IMR-90 (cell line): ENCODE measurements at regions of chr17 and their contacts with region 1.

Region 1: GRCh38 chr17:17681187-17681848 is at the start of gene RAI1:
- DNase-seq: peak; percentile 79
- ATAC-seq: peak; percentile 56
- H3K4me3 ChIP-seq: peak within 1 kb of the TSS; percentile 70
- H3K27ac ChIP-seq: peak within 1 kb of the TSS; percentile 81
- H3K4me1 ChIP-seq: peaks cover 18% of the 10 kb centered on the region
- H3K27me3 ChIP-seq: no peaks in the 10 kb centered on the region
- CTCF ChIP-seq: peak; percentile 83
- POLR2A ChIP-seq: peak; percentile 72
- RAD21 ChIP-seq: peak; percentile 80
- total RNA-seq, gene RAI1: 1.8 and 1.9 TPM in 2 replicates

Region 2: DNA sequence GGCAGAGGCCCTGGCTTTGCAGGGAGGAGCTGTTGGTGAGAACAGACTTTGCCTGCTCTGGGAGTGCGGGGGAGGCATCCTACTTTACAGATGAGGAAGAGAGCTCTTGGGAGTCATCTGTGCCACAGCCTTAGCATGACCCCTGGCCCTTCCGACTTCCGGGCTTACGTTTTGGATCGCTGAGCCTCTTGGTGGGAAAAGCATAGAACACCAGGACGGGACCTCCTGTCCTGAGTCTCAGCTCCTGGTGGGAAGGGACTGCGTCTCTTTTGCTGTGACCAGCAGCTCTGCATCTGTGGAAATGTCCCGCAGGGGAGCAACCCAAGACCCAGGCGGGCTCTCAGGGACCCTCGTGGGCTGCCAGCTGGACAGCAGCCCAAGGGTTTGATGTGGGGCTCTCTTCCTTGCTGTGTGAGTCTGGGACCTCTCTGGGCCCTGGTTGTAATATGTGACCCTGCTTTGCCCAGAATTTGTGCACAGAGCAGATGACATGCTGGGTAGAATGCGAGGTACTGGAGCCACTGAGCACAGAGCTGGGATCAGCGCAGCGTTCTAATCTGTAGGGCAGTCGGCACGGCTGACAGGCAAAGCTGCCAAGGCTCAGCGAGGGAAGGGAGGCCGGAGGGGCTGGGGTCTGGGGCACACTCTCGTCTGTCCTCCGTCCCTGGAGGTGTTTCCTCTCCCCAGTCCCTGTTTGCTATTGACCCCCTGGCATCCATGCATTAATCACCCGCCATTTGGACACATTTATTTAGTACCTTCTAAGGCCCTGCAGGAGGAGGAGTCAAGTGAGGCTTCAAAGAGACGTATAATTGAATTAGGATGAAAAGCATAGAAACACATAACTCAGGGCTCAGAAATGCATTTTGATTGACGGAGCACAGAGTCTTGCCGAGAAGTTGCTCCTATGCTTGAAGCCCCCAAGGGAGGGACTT is 314.1 kb before region 1 on chr17:
- CTCF ChIA-PET with region 1: no interaction called
- POLR2A ChIA-PET with region 1: no interaction called
- dilution Hi-C with region 1: no loop called
- in situ Hi-C with region 1: no loop called
- intact Hi-C with region 1: no loop called
- DNase-seq: no peak
- ATAC-seq: no peak
- H3K4me3 ChIP-seq: no peak overlapping the region
- H3K27ac ChIP-seq: no peak overlapping the region
- H3K4me1 ChIP-seq: peaks cover 2% of the 10 kb centered on the region; the same call in 1 of the 2 replicates
- H3K27me3 ChIP-seq: peaks cover 12% of the 10 kb centered on the region; the same call in 1 of the 2 replicates
- CTCF ChIP-seq: no peak
- POLR2A ChIP-seq: no peak
- RAD21 ChIP-seq: no peak

Region 3: DNA sequence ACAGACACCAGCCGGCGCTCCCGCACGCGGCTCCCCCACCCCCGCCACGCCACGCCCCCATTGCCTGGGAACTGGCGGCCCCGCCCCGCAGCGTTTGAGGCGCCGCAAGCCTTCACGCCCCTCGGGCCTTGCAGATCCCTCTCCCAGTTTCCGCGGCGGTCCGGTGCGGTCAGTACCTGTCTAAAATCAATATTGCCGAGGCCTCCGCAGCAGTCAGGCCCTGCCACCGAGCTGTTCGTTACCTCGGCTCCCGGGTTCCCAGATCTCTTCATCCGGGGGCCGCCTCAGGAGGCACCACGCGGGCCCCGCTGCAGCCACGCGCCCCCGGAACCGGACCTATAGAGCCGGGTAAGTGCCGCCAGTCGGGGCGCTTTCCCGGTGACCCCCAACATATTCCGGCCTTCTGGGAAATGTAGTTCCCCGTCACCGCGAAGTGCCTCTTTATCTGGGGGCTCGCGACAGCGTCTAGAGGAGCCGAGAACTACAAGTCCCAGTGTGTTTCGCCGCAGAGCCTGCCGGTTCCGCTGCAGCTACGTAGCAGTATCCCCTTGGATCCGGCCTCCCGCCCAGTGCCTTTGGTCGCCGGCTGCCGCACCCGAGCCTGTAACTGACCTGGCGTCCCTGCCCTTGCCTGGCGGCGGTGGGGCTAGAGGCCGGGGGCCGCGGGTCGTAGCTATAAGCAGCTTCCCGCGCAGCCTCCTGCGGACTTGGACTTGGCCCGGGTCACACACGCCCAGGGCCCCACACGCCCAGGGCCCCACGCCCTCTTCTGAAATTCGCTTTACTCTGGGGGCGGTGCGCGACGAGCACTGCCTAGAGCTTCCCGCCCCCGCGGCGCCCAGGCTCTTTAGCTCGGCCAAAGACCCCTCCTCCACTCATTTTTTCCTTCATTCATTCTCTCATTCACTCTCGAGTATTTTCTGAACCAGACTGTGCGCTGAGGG is 89.7 kb before region 1 on chr17 and contains the start of gene PEMT:
- CTCF ChIA-PET with region 1: no interaction called
- POLR2A ChIA-PET with region 1: no interaction called
- dilution Hi-C with region 1: no loop called
- in situ Hi-C with region 1: no loop called
- intact Hi-C with region 1: no loop called
- DNase-seq: peak; percentile 99
- ATAC-seq: peak; percentile 96
- H3K4me3 ChIP-seq: peak within 1 kb of the TSS; percentile 80
- H3K27ac ChIP-seq: peak within 1 kb of the TSS; percentile 84
- H3K4me1 ChIP-seq: peaks cover 9% of the 10 kb centered on the region
- H3K27me3 ChIP-seq: no peaks in the 10 kb centered on the region
- CTCF ChIP-seq: 0 out of 2 replicates have a peak, but pooled peaks have one; percentile 7
- POLR2A ChIP-seq: peak; percentile 66
- RAD21 ChIP-seq: no peak
- total RNA-seq, gene PEMT: 23.3 and 25.0 TPM in 2 replicates

Region 4: GRCh38 chr17:17698869-17699351 is 17.6 kb after region 1 on chr17:
- CTCF ChIA-PET with region 1: no interaction called
- POLR2A ChIA-PET with region 1: no interaction called
- dilution Hi-C with region 1: no loop called
- in situ Hi-C with region 1: no loop called
- intact Hi-C with region 1: no loop called
- DNase-seq: peak; percentile 41
- ATAC-seq: peak; percentile 6
- H3K4me3 ChIP-seq: no peak overlapping the region
- H3K27ac ChIP-seq: peak overlapping the region; percentile 7
- H3K4me1 ChIP-seq: peaks cover 77% of the 10 kb centered on the region
- H3K27me3 ChIP-seq: no peaks in the 10 kb centered on the region
- CTCF ChIP-seq: no peak
- POLR2A ChIP-seq: no peak
- RAD21 ChIP-seq: no peak

Region 5: GRCh38 chr17:17723354-17724261 is 42.3 kb after region 1 on chr17:
- CTCF ChIA-PET with region 1: no interaction called
- POLR2A ChIA-PET with region 1: no interaction called
- dilution Hi-C with region 1: no loop called
- in situ Hi-C with region 1: no loop called
- intact Hi-C with region 1: loop called (anchors 5 kb)
- DNase-seq: peak; percentile 90
- ATAC-seq: peak; percentile 74
- H3K4me3 ChIP-seq: peak overlapping the region; percentile 48
- H3K27ac ChIP-seq: peak overlapping the region; percentile 78
- H3K4me1 ChIP-seq: peaks cover 37% of the 10 kb centered on the region
- H3K27me3 ChIP-seq: no peaks in the 10 kb centered on the region
- CTCF ChIP-seq: no peak
- POLR2A ChIP-seq: no peak; the same call in 1 of the 2 replicates
- RAD21 ChIP-seq: no peak

Region 6: GRCh38 chr17:17783116-17783824 is 102.0 kb after region 1 on chr17:
- CTCF ChIA-PET with region 1: no interaction called
- POLR2A ChIA-PET with region 1: no interaction called
- dilution Hi-C with region 1: no loop called
- in situ Hi-C with region 1: no loop called
- intact Hi-C with region 1: loop called (anchors 10 kb)
- DNase-seq: no peak
- ATAC-seq: peak; percentile 24
- H3K4me3 ChIP-seq: no peak overlapping the region
- H3K27ac ChIP-seq: no peak overlapping the region
- H3K4me1 ChIP-seq: peaks cover 42% of the 10 kb centered on the region
- H3K27me3 ChIP-seq: no peaks in the 10 kb centered on the region
- CTCF ChIP-seq: no peak
- POLR2A ChIP-seq: no peak
- RAD21 ChIP-seq: no peak

Region 7: DNA sequence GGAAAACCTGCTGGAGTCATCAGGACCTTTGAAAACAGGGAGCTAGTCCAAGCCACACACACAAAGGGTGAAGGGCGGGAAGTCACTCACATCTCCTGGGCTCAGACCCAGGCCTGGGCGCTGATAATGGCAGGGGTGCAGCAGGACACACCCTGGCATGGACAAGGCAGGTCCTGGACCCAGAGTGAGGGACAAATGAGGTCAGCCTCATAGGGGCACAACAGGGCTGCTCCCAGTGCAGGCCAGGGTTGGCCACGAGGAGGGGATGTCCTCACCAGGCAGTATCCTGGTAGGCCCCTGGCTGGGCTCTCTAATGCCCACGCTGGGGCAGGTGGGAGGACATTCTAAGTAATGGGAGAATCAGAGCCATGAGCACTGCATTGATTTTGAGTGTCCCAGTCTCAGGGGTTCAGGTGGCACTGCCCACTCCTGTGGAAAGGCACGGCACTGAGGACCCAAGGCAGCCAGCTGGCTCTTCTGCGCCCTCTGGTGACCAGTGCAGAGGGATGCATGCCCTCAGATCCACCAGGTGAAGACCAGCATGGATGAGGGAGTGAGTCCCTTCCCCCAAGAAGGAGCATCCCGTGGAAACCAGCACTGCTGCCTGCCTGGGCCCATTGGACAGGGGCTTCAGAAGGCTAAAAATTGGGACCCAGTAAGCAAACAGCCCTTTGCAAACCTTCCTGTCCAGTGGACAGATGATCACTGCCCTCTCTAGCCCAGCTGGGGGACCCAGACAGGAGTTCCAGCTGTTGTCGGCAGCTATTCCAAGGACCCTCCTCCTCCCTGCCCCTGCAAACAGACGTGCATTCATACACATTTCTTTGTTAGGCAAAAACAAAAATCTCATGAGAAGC is 178.8 kb after region 1 on chr17:
- CTCF ChIA-PET with region 1: interaction called, 4 read pairs
- POLR2A ChIA-PET with region 1: no interaction called
- dilution Hi-C with region 1: no loop called
- in situ Hi-C with region 1: loop called (anchors 5 kb)
- intact Hi-C with region 1: loop called (anchors 1 kb)
- DNase-seq: peak; percentile 38
- ATAC-seq: peak; percentile 95
- H3K4me3 ChIP-seq: no peak overlapping the region
- H3K27ac ChIP-seq: no peak overlapping the region
- H3K4me1 ChIP-seq: no peaks in the 10 kb centered on the region; the same call in 1 of the 2 replicates
- H3K27me3 ChIP-seq: no peaks in the 10 kb centered on the region
- CTCF ChIP-seq: peak; percentile 89
- POLR2A ChIP-seq: no peak; the same call in 1 of the 2 replicates
- RAD21 ChIP-seq: peak; percentile 93

Region 8: GRCh38 chr17:18038861-18039534 is 357.7 kb after region 1 on chr17 and contains the starts of genes ATPAF2 and GID4:
- CTCF ChIA-PET with region 1: no interaction called
- POLR2A ChIA-PET with region 1: no interaction called
- dilution Hi-C with region 1: no loop called
- in situ Hi-C with region 1: loop called (anchors 10 kb)
- intact Hi-C with region 1: loop called (anchors 5 kb)
- DNase-seq: peak; percentile 98
- ATAC-seq: peak; percentile 96
- H3K4me3 ChIP-seq: peak within 1 kb of the TSS; percentile 66
- H3K27ac ChIP-seq: peak within 1 kb of the TSS; percentile 78
- H3K4me1 ChIP-seq: peaks cover 14% of the 10 kb centered on the region
- H3K27me3 ChIP-seq: no peaks in the 10 kb centered on the region
- CTCF ChIP-seq: no peak
- POLR2A ChIP-seq: peak; percentile 49; the same call in 1 of the 2 replicates
- RAD21 ChIP-seq: no peak
- total RNA-seq, gene ATPAF2: 14.2 and 27.6 TPM in 2 replicates
- total RNA-seq, gene GID4: 3.9 and 5.0 TPM in 2 replicates